Posterior cingulate gyrus (tissue), 11 donors: ENCODE measurements at regions of chr5 and their contacts with region 1.

Region 1: GRCh38 chr5:129767906-129768380 is 20.0 kb downstream of the MINAR2 start:
- DNase-seq: peak in 7 of 10 donors; percentile 22 to 74 (median 64)

Region 2: GRCh38 chr5:128905571-128906110 is 862.3 kb before region 1 on chr5:
- intact Hi-C with region 1: loop called (anchors 1 kb)
- DNase-seq: peak in 2 of 10 donors; percentile 14 to 35

Region 3: GRCh38 chr5:129172580-129172979 is 595.4 kb before region 1 on chr5:
- intact Hi-C with region 1: loop called (anchors 1 kb)
- DNase-seq: no peak

Region 4: DNA sequence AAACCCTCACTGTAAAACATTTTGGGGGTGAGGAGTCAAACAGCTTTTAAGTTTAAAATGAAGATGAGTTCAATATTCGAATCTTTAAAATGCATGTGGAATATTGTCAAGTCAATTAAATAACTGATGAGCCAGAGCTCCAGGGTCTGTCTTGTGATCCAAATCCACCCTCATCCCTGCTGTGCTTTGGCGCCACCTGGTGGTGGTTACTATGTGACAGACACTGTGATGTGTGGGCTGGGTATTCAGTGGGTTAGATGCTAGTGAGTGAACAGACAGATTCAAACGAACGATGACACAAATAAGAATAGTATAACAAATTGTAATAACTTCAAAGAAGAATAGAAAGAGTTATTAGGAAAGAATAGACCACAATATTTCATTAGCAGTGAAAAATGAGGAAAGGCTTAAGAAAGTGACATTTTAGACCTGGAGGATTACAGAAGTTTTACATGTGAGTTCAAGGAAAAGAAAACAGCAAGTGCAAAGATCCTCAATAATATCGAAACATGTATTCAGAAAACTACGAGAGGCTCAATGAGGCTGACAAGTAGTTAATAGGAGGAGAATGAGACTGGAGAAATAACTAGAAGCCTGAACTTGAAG is 84.9 kb after region 1 on chr5:
- intact Hi-C with region 1: loop called (anchors 1 kb)
- DNase-seq: peak; percentile 40 to 96 (median 79)

Region 5: DNA sequence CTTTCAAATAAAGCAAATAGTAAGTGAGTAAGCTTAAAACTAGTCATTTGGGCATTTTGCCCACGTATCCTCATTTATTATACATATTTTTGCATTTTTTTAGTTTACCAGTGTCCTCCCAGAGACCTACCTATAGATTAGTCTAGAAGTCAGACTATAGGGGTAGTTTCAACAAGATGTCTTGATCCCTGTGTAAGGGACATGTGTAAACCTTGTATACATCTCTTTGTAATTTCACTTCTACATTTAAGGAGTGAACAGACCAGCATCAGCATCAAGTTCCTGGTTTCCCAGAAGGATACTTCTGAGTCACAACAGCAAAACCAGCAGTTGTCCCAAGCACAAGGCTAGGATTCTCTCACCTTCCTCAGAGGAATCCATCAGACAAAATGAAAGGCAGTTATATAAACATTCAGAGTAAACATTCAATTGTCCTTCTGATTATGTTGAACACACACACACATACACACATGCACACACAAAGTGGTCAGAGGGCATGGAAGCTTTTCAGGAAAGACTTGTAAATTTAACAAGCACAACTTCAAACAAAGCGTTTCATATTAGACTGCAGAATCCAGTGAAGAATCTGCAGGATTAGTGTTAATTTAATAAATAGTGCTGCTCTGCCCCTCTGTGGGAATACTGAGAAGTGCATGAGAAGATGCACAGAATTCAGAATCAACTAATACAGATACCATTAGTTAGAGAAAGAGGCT is 1341.8 kb after region 1 on chr5:
- intact Hi-C with region 1: loop called (anchors 1 kb)
- DNase-seq: peak in 2 of 10 donors; percentile 17 to 36